GM18951 (cell line): ENCODE measurements at regions of chr10 and their contacts with region 1.

Region 1: DNA sequence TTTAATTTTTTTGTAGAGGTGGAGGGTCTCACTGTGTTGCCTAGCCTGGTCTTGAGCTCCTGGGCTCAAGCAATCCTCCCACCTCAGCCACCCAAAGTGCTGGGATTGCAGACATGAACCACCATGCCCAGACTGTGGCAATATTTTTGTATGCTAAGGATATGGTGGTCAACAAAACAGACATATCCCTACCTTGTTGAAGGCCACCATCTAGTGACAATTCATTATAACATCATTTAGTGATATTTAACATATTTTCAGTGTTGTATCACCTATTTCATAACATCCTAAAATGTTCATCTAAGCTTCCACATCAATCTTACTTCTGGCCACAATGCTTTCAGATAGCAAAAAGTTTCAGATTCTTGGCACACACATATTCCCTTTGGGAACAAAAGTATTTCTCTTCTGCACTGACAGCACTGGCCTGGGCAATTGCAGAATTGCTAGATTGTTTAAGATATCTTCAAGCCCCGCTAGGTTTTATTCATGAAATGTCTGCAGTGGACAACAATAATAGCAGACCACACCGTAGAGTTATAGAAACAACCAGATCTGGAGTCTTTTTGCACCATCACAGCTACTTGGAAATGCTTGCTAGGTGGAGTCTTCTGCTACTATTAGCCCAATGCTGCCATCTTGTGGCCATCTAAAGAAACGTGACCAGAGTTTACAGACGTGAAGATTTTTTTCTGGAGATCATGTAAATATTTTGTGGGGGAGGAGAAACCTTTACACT is 58.4 kb downstream of the DNAJC12 start:
- POLR2A ChIP-seq: no peak

Region 2: DNA sequence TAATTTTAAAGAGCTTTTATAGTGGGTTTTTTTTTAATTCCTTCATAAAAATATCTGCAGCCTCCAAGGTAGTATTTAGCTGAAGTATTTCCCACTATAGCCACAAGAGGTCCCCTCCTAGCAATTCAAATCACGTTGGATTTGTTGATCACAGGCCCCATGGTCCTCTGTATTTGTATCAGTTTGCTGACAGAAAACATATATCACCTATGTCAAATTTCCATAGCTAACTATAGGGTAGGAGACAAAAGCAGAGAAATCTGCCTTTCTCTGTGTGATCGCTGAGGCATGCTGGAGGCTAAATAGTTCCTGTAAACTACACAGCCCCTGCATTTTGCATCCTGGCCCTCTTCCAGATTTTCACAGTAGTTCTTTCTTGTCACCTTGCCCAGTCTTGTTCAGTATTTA is 81.9 kb before region 1 on chr10:
- in situ Hi-C with region 1: loop called (anchors 5 kb)
- POLR2A ChIP-seq: no peak